AG04450 (cell line): ENCODE measurements at regions of chr6 and their contacts with region 1.

Region 1: DNA sequence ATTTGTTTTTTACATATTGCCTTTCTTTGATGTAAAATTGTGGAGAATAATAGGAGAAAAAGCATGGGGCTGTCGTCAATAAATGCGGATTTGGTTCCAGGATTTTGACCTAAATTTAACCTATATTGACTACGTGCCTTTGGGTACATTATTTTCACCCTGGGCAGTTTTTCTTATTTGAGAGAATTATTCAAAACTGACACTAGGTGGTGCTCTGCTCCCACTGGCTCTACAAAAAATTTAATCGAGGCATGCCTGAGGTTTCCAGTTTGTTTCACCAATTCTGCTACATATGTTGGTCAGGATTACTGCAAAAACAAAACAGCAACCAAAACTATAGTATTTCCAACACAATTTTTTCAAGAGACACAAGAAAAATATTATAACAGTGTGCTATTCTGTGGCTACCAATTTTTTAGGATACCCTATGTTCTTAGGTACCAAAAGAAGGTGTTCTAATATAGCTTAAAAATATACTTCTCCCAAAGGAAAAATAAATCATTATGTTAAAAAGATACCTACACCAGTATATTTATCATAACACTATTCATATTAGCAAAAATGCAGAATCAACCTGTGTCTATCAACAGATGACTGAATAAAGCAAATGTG is 48.6 kb upstream of the FABP7 start:
- DNase-seq: no peak
- H3K4me3 ChIP-seq: no peak overlapping the region
- H3K27ac ChIP-seq: no peak overlapping the region
- H3K27me3 ChIP-seq: peaks cover 5% of the 10 kb centered on the region
- CTCF ChIP-seq: peak; percentile 84

Region 2: DNA sequence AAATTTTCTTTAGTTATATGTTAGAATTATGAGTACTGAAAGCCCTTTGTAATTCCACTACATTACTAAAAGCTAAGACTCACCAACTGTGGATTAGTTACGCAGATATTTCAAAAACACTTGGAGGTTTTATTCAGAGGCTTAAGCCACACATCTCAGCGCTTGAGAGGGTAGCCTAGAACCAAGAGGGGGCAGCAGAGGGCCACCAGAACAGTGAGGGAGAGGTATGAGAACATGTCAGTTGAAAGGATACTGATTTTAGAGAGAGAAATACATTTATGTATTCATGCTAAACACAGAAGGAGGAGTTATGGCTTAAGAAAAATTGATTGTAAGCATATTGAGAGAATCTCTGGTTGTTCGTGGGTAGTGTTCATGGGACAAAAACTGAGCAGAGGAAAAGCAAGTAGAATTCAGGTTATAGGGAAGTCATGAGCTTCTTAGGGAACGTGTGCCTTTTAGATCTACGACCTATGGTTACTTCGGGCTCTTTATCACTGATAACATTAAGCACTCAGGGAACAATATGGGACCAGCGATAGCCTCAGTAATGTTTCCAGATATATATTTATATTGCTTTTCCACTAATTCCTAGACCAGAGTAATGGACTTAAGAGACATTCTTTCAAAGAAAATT is 238.8 kb before region 1 on chr6:
- CTCF ChIA-PET with region 1: interaction called, 74 read pairs
- POLR2A ChIA-PET with region 1: no interaction called
- DNase-seq: peak; percentile 36
- H3K4me3 ChIP-seq: no peak overlapping the region
- H3K27ac ChIP-seq: no peak overlapping the region
- H3K27me3 ChIP-seq: no peaks in the 10 kb centered on the region
- CTCF ChIP-seq: peak; percentile 98

Region 3: DNA sequence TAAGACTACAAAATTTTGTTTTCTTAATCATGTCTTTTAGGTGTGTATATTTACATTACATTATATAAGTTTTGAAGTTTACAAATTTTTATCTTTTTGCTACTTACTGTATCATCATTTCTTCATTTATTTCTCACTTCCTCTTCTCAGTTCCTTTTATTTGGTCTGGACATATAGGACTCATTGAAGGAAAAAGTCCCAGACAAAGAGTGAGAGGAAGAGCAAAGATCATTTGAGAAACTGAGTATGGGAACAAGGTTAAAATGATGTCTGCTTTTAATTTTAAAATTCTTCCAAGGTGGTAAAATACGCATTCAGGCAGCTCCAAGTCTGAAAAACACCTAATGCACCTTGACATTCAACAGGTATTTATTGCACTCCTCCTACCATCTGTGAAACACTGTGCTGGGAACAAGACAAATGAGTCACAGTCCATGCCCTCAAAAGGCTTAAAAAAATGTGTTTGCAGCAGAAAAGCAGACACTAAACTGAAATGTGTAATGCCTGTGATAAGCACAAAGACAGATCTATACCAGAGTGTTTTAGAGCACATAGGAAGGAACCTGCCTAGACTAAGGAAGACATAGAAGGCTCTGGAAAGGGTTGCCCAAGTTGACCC is 57.4 kb before region 1 on chr6:
- CTCF ChIA-PET with region 1: no interaction called
- POLR2A ChIA-PET with region 1: no interaction called
- DNase-seq: no peak
- H3K4me3 ChIP-seq: no peak overlapping the region
- H3K27ac ChIP-seq: no peak overlapping the region
- H3K27me3 ChIP-seq: no peaks in the 10 kb centered on the region
- CTCF ChIP-seq: no peak

Region 4: DNA sequence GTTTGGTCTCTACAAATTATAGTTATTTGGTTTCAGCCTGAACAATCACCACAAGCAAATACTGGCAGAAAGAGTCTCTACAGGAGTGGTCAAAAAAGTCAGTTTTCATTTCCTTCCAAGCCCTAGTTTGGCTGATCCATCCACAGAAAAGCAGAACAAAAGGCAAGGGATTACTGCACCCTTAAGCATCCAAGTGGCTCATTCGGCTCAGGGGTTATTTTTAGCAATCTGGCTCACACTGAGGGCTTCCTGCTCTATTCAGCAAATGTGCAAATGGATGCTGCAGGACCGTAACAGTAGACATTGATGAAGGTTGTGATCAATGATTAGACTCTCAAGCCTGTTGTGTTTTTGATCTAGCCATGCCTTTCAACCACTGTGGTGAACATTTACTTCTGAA is 13.5 kb before region 1 on chr6:
- CTCF ChIA-PET with region 1: interaction called, 30 read pairs
- POLR2A ChIA-PET with region 1: no interaction called
- DNase-seq: no peak
- H3K4me3 ChIP-seq: no peak overlapping the region; the same call in 1 of the 2 replicates
- H3K27ac ChIP-seq: no peak overlapping the region
- H3K27me3 ChIP-seq: no peaks in the 10 kb centered on the region
- CTCF ChIP-seq: no peak

Region 5: GRCh38 chr6:122789182-122790027 is 58.5 kb after region 1 on chr6 and contains the start of gene SMPDL3A:
- CTCF ChIA-PET with region 1: interaction called, 23 read pairs
- POLR2A ChIA-PET with region 1: interaction called, 5 read pairs
- DNase-seq: peak; percentile 92
- H3K4me3 ChIP-seq: peak within 1 kb of the TSS; percentile 91
- H3K27ac ChIP-seq: peak within 1 kb of the TSS; percentile 96
- H3K27me3 ChIP-seq: no peaks in the 10 kb centered on the region
- CTCF ChIP-seq: peak; percentile 43; the same call in 1 of the 2 replicates
- polyA plus RNA-seq, gene SMPDL3A: 84.4 and 105 TPM in 2 replicates

Region 6: GRCh38 chr6:122887941-122888340 is 157.1 kb after region 1 on chr6:
- CTCF ChIA-PET with region 1: no interaction called
- POLR2A ChIA-PET with region 1: no interaction called
- DNase-seq: no peak
- H3K4me3 ChIP-seq: no peak overlapping the region
- H3K27ac ChIP-seq: no peak overlapping the region
- H3K27me3 ChIP-seq: no peaks in the 10 kb centered on the region
- CTCF ChIP-seq: no peak

Region 7: DNA sequence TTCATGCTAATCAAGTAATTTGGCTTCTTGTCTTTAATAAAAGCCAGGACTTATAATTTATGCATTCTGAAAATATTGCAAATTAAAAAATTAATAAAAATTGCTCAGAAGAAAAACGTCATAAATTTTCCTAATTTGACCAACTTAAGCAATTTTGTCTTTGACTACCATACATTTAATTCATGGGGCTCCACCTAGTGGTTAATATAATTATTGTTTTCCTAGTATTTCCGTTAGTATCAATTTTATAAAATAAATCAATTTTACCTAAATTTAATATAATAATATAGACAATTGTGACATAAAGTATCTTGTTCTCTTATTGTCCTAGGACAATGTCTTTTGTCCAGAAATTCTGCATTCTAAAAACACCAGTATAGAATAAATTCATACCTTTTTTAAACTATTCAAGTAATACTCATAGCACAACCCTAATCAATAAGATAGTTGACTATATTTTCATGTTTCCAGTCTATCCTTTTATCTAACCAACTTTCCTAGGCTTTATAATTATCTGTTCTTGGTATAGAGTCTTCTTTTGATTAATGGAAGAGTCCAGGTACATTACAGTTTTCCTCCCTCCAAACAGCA is 585.9 kb after region 1 on chr6:
- CTCF ChIA-PET with region 1: interaction called, 12 read pairs
- POLR2A ChIA-PET with region 1: no interaction called
- DNase-seq: no peak
- H3K4me3 ChIP-seq: no peak overlapping the region
- H3K27ac ChIP-seq: no peak overlapping the region
- H3K27me3 ChIP-seq: no peaks in the 10 kb centered on the region
- CTCF ChIP-seq: peak; percentile 53